ENCODE measurements at regions of chr6 and their contacts with region 1.

Region 1: DNA sequence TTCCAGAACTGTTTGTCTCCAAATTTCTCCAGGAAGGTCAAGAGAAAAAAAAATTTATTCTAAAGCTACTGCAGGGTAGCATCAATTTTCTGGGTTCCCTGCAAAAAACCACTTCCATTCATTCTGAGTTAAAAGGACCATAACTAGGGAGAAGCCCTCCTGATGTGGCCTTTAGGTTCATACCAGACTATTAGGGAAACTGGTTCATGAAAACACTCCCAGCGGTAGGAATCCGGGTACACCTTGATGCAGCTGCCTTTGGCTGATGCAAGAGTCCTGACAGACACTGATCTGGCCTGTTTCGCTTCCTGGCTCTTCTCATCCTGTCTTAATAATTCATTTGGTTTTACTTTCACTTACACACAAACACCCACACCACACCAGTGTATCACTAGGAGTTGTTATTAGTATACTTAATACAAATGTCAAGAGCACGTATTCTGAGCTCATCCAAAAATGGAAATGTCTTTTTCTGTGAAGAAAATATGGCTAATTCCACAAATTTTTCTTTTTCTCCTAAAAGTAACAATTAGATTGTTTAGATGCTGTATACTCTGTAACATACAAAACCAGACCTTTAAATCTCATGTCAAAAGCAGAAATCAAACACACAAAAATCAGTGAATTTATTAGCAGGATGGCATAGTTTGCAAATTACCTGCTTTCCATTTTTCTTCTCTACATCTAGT is 38.4 kb upstream of the ARHGAP18 start:
- DNase-seq: peak; percentile 76
- ATAC-seq: peak; percentile 93
- H3K4me3 Mint-ChIP-seq: peak overlapping the region; percentile 62
- H3K27ac Mint-ChIP-seq: peak overlapping the region; percentile 92
- H3K4me1 Mint-ChIP-seq: peaks cover 61% of the 10 kb centered on the region
- H3K27me3 Mint-ChIP-seq: no peaks in the 10 kb centered on the region

Region 2: DNA sequence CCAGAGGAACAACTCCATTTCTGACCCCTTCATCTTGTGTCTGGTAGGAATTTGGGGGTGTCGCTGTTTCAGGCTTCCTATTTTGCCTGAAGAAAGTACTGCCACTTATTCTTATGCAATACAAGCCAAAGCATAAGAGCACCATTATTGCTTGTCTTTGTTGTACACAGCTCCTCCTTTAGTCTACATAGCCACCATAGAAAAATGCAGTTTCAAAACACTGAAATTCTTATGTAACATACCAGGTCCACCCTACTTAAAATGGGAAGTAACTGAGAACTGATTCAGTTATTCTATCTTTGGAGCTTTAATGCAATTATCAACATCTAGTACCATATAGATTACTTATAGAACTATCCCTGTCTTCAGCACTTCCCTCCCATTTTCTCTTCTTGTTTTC is 293.9 kb before region 1 on chr6:
- CTCF ChIA-PET with region 1: no interaction called
- POLR2A ChIA-PET with region 1: no interaction called
- intact Hi-C with region 1: loop called in 1 of 2 experiments (anchors 5 kb)
- DNase-seq: no peak
- ATAC-seq: no peak
- H3K4me3 Mint-ChIP-seq: no peak overlapping the region
- H3K27ac Mint-ChIP-seq: no peak overlapping the region
- H3K4me1 Mint-ChIP-seq: peaks cover 43% of the 10 kb centered on the region
- H3K27me3 Mint-ChIP-seq: no peaks in the 10 kb centered on the region

Region 3: DNA sequence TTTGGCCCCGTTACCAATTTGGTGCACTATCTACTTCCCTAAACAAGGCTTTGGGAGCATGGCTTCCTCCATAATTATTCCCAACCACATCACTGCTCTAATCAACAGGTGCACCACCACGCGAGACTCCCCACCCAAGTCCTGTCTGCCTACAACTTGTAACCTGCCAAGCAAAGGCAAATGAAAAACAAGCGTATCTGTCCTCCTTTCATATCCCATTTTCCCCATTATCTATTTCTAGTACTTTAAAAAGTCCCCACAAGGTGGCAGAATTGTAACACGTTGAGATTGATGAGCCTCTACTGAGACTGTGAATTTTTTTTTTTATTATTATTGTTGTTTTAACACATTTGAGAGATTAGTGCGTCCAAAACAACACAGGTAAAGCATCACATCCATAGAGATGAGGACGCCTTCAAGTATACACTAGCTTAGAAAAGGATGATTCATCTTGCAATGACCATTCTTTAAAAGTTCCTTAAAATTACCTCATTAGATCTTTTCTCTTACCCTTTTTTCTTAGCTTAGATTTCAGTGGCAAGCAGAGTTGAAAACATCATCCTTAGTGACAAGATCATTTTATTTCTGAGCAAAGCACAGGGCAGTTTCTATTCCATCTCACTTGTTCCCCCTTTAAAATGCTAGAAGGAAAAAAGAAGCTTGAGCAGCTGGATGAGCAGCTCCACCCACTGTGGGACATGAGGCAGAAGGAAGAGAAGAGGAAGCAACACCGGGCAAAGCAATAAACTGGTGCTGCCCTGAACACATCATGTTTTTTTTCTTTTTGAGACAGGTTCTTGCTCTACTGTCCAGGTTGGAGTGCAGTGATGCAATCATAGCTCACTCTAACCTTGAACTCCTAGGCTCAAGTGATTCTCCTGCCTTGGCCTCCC is 249.2 kb before region 1 on chr6:
- CTCF ChIA-PET with region 1: interaction called, 5 read pairs
- POLR2A ChIA-PET with region 1: interaction called, 3 read pairs
- intact Hi-C with region 1: loop called in 1 of 2 experiments (anchors 2 kb)
- DNase-seq: no peak
- ATAC-seq: peak; percentile 56
- H3K4me3 Mint-ChIP-seq: peak overlapping the region; percentile 47
- H3K27ac Mint-ChIP-seq: peak overlapping the region; percentile 88
- H3K4me1 Mint-ChIP-seq: peaks cover 66% of the 10 kb centered on the region
- H3K27me3 Mint-ChIP-seq: no peaks in the 10 kb centered on the region

Region 4: GRCh38 chr6:129583866-129584265 is 164.5 kb before region 1 on chr6:
- CTCF ChIA-PET with region 1: no interaction called
- POLR2A ChIA-PET with region 1: no interaction called
- intact Hi-C with region 1: no loop called
- DNase-seq: no peak
- ATAC-seq: no peak
- H3K4me3 Mint-ChIP-seq: no peak overlapping the region
- H3K27ac Mint-ChIP-seq: no peak overlapping the region
- H3K4me1 Mint-ChIP-seq: no peaks in the 10 kb centered on the region
- H3K27me3 Mint-ChIP-seq: no peaks in the 10 kb centered on the region

Region 5: GRCh38 chr6:129683601-129684322 is 64.6 kb before region 1 on chr6:
- CTCF ChIA-PET with region 1: interaction called, 5 read pairs
- POLR2A ChIA-PET with region 1: interaction called, 3 read pairs
- intact Hi-C with region 1: loop called in 1 of 2 experiments (anchors 2 kb)
- DNase-seq: peak; percentile 79
- ATAC-seq: peak; percentile 96
- H3K4me3 Mint-ChIP-seq: peak overlapping the region; percentile 28
- H3K27ac Mint-ChIP-seq: peak overlapping the region; percentile 75
- H3K4me1 Mint-ChIP-seq: peaks cover 52% of the 10 kb centered on the region
- H3K27me3 Mint-ChIP-seq: no peaks in the 10 kb centered on the region

Region 6: GRCh38 chr6:129766959-129767728 is 18.8 kb after region 1 on chr6:
- CTCF ChIA-PET with region 1: interaction called, 12 read pairs
- POLR2A ChIA-PET with region 1: no interaction called
- intact Hi-C with region 1: no loop called
- DNase-seq: peak; percentile 82
- ATAC-seq: peak; percentile 97
- H3K4me3 Mint-ChIP-seq: peak overlapping the region; percentile 62
- H3K27ac Mint-ChIP-seq: no peak overlapping the region
- H3K4me1 Mint-ChIP-seq: peaks cover 12% of the 10 kb centered on the region
- H3K27me3 Mint-ChIP-seq: peaks cover 38% of the 10 kb centered on the region

Region 7: GRCh38 chr6:129785047-129785755 is 36.8 kb after region 1 on chr6:
- CTCF ChIA-PET with region 1: no interaction called
- POLR2A ChIA-PET with region 1: no interaction called
- intact Hi-C with region 1: no loop called
- DNase-seq: no peak
- ATAC-seq: no peak
- H3K4me3 Mint-ChIP-seq: no peak overlapping the region
- H3K27ac Mint-ChIP-seq: no peak overlapping the region
- H3K4me1 Mint-ChIP-seq: no peaks in the 10 kb centered on the region
- H3K27me3 Mint-ChIP-seq: no peaks in the 10 kb centered on the region

Region 8: GRCh38 chr6:130027948-130028347 is 279.6 kb after region 1 on chr6:
- CTCF ChIA-PET with region 1: interaction called, 3 read pairs
- POLR2A ChIA-PET with region 1: no interaction called
- intact Hi-C with region 1: loop called in 1 of 2 experiments (anchors 2 kb)
- DNase-seq: no peak
- ATAC-seq: peak; percentile 67
- H3K4me3 Mint-ChIP-seq: no peak overlapping the region
- H3K27ac Mint-ChIP-seq: peak overlapping the region; percentile 66
- H3K4me1 Mint-ChIP-seq: peaks cover 62% of the 10 kb centered on the region
- H3K27me3 Mint-ChIP-seq: no peaks in the 10 kb centered on the region